ENCODE measurements at regions of chr14 and their contacts with region 1.

Region 1: GRCh38 chr14:21476925-21477681 is at the starts of genes RAB2B and TOX4:
- DNase-seq: peak; percentile 96
- ATAC-seq: peak; percentile 98
- H3K4me3 Mint-ChIP-seq: peak within 1 kb of the TSS; percentile 99
- H3K27ac Mint-ChIP-seq: peak within 1 kb of the TSS; percentile 100
- H3K4me1 Mint-ChIP-seq: peaks cover 22% of the 10 kb centered on the region
- H3K27me3 Mint-ChIP-seq: no peaks in the 10 kb centered on the region
- total RNA-seq, gene RAB2B: 21.2 to 22.0 TPM
- total RNA-seq, gene TOX4: 79.5 to 85.6 TPM

Region 2: DNA sequence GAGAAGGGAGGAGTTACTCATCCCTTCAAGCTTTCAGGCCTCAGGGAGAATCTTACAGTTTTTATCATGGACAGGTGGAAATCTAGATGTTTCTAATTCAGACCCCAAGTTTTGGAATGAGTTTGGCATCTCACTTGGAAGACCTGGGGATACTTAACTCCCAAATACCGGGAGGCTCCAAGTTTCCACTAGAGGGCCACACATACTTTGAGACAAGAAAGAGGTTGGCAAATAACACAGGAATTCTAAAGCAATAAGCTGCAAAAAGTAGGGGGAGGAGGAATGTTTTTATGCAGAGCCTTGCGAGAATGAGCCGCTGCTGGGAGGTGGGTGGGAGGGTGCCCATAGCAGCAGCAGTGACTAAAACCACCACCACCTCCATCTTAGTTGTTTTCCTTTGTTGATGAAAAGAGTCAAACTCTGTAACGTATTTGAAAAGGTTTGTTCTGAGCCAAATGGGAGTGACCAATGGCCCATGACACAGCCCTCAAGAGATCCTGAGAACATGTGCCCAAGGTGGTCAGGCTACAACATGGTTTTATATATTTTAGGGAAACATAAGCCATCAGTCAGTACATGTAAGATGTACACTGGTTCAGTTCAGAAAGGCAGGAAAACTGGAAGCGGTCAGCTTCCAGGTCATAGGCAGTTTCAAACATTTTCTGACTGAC is 640.3 kb before region 1 on chr14:
- CTCF ChIA-PET with region 1: no interaction called
- POLR2A ChIA-PET with region 1: no interaction called
- intact Hi-C with region 1: no loop called
- DNase-seq: no peak
- ATAC-seq: no peak
- H3K4me3 Mint-ChIP-seq: no peak overlapping the region
- H3K27ac Mint-ChIP-seq: no peak overlapping the region
- H3K4me1 Mint-ChIP-seq: no peaks in the 10 kb centered on the region
- H3K27me3 Mint-ChIP-seq: no peaks in the 10 kb centered on the region

Region 3: GRCh38 chr14:21308479-21309237 is 168.4 kb before region 1 on chr14:
- CTCF ChIA-PET with region 1: interaction called, 4 read pairs
- POLR2A ChIA-PET with region 1: no interaction called
- intact Hi-C with region 1: loop called in 1 of 2 experiments (anchors 1 kb)
- DNase-seq: peak; percentile 88
- ATAC-seq: peak; percentile 93
- H3K4me3 Mint-ChIP-seq: peak overlapping the region; percentile 73
- H3K27ac Mint-ChIP-seq: peak overlapping the region; percentile 92
- H3K4me1 Mint-ChIP-seq: peaks cover 22% of the 10 kb centered on the region
- H3K27me3 Mint-ChIP-seq: no peaks in the 10 kb centered on the region

Region 4: GRCh38 chr14:21437063-21437901 is 39.8 kb before region 1 on chr14:
- CTCF ChIA-PET with region 1: interaction called, 17 read pairs
- POLR2A ChIA-PET with region 1: interaction called, 9 read pairs
- intact Hi-C with region 1: loop called (anchors 1 kb)
- DNase-seq: peak; percentile 99
- ATAC-seq: peak; percentile 99
- H3K4me3 Mint-ChIP-seq: peak overlapping the region; percentile 95
- H3K27ac Mint-ChIP-seq: peak overlapping the region; percentile 87
- H3K4me1 Mint-ChIP-seq: peaks cover 57% of the 10 kb centered on the region
- H3K27me3 Mint-ChIP-seq: no peaks in the 10 kb centered on the region

Region 5: GRCh38 chr14:21510735-21511657 is 33.9 kb after region 1 on chr14 and contains the start of gene METTL3:
- CTCF ChIA-PET with region 1: interaction called, 14 read pairs
- POLR2A ChIA-PET with region 1: interaction called, 15 read pairs
- intact Hi-C with region 1: loop called (anchors 1 kb)
- DNase-seq: peak; percentile 96
- ATAC-seq: peak; percentile 99
- H3K4me3 Mint-ChIP-seq: peak within 1 kb of the TSS; percentile 97
- H3K27ac Mint-ChIP-seq: peak within 1 kb of the TSS; percentile 96
- H3K4me1 Mint-ChIP-seq: peaks cover 42% of the 10 kb centered on the region
- H3K27me3 Mint-ChIP-seq: no peaks in the 10 kb centered on the region
- total RNA-seq, gene METTL3: 64.0 to 67.4 TPM

Measured in activated CD4-positive, alpha-beta T cell treated with anti-CD3 and anti-CD28 coated beads for 36 hours (primary cell).